ENCODE measurements at regions of chr11 and their contacts with region 1.

Region 1: DNA sequence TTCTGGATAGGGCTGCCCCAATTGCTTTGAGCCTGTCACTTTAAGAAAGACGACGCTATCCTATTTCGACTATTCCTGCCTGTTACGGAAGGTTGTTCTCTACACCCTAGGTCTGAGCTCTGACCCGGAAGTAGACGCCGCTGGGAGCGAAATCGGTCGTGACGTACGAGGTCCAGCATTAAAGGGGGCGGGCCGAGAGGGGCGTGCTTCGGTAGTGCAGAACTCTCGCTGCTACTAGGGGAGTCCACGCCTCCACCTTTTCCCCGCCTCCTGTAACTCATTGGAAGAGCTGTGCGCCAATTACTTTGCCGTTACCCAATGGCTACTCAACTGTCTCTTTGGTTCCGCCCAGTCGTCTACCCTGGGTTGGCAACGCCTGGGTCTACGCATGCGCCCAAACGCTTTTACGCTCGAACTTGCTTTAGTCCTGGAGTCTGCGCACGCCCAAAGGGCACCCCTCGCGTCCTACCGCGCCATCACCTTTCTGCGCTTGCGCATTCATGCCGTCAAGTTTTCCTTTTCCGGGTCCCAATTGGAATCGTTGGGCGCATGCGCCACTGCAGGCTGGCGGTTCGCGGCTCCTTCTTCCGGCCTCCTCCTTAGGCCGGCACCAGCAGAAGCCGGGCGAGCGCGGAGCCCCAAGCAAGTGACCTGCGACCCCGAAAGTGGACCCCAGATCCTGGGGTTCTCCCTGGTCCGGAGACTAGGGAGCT is at the start of gene PCNX3:
- DNase-seq: peak; percentile 99 to 100 (median 100)
- ATAC-seq: peak; percentile 87
- H3K4me3 ChIP-seq: peak within 1 kb of the TSS; percentile 93
- H3K4me3 Mint-ChIP-seq: peak within 1 kb of the TSS; percentile 98
- H3K27ac ChIP-seq: peak within 1 kb of the TSS; percentile 94
- H3K27ac Mint-ChIP-seq: peak within 1 kb of the TSS; percentile 93
- H3K4me1 ChIP-seq: peaks cover 67% of the 10 kb centered on the region
- H3K4me1 Mint-ChIP-seq: peaks cover 46% of the 10 kb centered on the region
- H3K27me3 ChIP-seq: no peaks in the 10 kb centered on the region
- H3K27me3 Mint-ChIP-seq: no peaks in the 10 kb centered on the region
- CTCF ChIP-seq: no peak
- total RNA-seq, gene PCNX3: 37.3 to 40.5 TPM

Region 2: DNA sequence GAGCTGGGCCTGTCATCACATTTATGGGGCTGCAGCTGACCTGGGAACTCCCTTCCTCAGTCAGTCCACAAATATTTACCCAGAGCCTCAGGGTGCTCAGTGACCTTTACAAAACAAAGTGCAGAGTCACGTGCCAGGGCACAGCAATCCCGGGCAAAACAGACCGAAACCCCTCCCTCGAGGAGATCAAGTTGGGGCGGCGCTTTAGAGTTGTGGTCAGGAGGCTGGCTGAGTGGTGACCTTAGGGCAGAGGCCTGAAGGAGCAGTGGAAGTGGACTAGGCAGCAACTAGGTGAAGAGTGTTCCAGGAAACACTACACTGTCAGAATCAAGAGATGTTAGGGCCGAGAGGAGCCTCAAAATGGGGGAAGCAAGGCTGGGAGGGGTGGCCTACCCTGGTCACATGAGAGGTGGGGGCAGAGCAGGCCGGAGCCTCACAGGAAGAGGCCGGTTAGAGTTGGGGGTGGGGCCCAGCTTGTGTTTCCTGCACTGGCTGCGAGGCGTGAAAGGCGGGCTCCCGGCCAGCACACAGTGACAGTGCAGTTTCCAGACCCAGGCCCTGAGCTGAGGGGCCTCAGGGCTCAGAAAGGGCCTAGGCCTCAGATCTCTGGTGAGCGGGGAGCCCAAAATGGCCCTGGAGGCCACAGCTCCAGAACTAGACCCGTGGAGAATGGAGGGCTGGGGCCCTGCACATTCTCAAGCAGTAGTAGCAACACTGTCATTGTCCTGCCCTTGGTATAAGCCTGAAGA is 196.5 kb before region 1 on chr11:
- CTCF ChIA-PET with region 1: no interaction called
- POLR2A ChIA-PET with region 1: interaction called, 16 read pairs
- intact Hi-C with region 1: no loop called
- DNase-seq: peak in 12 of 14 experiments; percentile 56 to 94 (median 75)
- ATAC-seq: peak; percentile 2
- H3K4me3 ChIP-seq: peak overlapping the region; percentile 86
- H3K4me3 Mint-ChIP-seq: peak overlapping the region; percentile 92
- H3K27ac ChIP-seq: peak overlapping the region; percentile 99
- H3K27ac Mint-ChIP-seq: peak overlapping the region; percentile 96
- H3K4me1 ChIP-seq: peaks cover 74% of the 10 kb centered on the region
- H3K4me1 Mint-ChIP-seq: peaks cover 57% of the 10 kb centered on the region
- H3K27me3 ChIP-seq: no peaks in the 10 kb centered on the region
- H3K27me3 Mint-ChIP-seq: no peaks in the 10 kb centered on the region
- CTCF ChIP-seq: no peak

Region 3: DNA sequence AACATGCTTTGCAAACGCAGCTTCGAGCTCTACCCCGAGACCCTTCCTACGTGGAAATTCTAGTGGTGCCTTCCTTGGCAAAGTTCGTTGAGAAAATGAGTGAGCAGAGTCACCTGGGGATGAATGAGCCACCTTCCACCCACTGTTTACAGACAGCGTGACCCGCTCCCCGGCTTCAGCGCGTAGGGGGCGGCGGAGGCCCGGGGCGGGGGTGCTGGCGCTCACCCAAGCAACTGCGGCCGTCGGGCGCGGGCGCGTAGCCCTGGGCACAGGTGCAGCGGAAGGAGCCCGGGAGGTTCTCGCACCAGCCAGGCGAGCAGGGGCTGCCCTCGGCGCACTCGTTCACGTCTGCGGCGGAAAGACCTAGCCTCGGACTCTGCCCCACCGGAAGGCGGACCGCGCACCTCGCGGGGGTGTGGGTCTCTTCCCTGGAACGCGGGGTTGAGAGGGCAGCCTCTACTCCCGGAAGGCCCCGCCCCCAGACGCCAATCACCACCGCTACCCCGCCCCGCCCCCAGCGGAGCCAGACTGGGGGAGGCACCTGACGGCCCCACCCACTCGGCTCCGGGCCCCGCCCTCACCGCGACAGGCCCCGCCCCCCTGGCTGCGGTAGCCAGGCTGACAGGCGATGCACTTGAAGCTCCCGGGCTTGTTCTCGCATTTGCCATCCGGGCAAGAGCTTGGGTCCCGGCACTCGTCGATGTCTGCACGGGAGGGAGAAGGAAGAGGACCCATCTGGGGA is 69.0 kb before region 1 on chr11:
- CTCF ChIA-PET with region 1: interaction called, 3 read pairs
- POLR2A ChIA-PET with region 1: interaction called, 32 read pairs
- intact Hi-C with region 1: loop called in 1 of 2 experiments (anchors 2 kb)
- DNase-seq: peak; percentile 96 to 100 (median 98)
- ATAC-seq: peak; percentile 80
- H3K4me3 ChIP-seq: peak overlapping the region; percentile 54
- H3K4me3 Mint-ChIP-seq: peak overlapping the region; percentile 86
- H3K27ac ChIP-seq: peak overlapping the region; percentile 57 to 82
- H3K27ac Mint-ChIP-seq: peak overlapping the region; percentile 81
- H3K4me1 ChIP-seq: peaks cover 49% of the 10 kb centered on the region
- H3K4me1 Mint-ChIP-seq: peaks cover 67% of the 10 kb centered on the region
- H3K27me3 ChIP-seq: no peaks in the 10 kb centered on the region
- H3K27me3 Mint-ChIP-seq: no peaks in the 10 kb centered on the region
- CTCF ChIP-seq: no peak

Region 4: GRCh38 chr11:65593518-65594298 is 21.7 kb before region 1 on chr11:
- CTCF ChIA-PET with region 1: no interaction called
- POLR2A ChIA-PET with region 1: interaction called, 11 read pairs
- intact Hi-C with region 1: no loop called
- DNase-seq: peak in 9 of 14 experiments; percentile 37 to 67 (median 43)
- ATAC-seq: peak; percentile 62
- H3K4me3 ChIP-seq: no peak overlapping the region
- H3K4me3 Mint-ChIP-seq: no peak overlapping the region
- H3K27ac ChIP-seq: no peak overlapping the region
- H3K27ac Mint-ChIP-seq: peak overlapping the region; percentile 36
- H3K4me1 ChIP-seq: peaks cover 31% of the 10 kb centered on the region
- H3K4me1 Mint-ChIP-seq: peaks cover 17% of the 10 kb centered on the region
- H3K27me3 ChIP-seq: no peaks in the 10 kb centered on the region
- H3K27me3 Mint-ChIP-seq: no peaks in the 10 kb centered on the region
- CTCF ChIP-seq: peak; percentile 66

Region 5: GRCh38 chr11:65652511-65653231 is 37.3 kb after region 1 on chr11:
- CTCF ChIA-PET with region 1: interaction called, 3 read pairs
- POLR2A ChIA-PET with region 1: interaction called, 79 read pairs
- intact Hi-C with region 1: loop called in 1 of 2 experiments (anchors 5 kb)
- DNase-seq: peak; percentile 92 to 99 (median 96)
- ATAC-seq: peak; percentile 75
- H3K4me3 ChIP-seq: peak overlapping the region; percentile 66
- H3K4me3 Mint-ChIP-seq: peak overlapping the region; percentile 88
- H3K27ac ChIP-seq: peak overlapping the region; percentile 95 to 99
- H3K27ac Mint-ChIP-seq: peak overlapping the region; percentile 97
- H3K4me1 ChIP-seq: peaks cover 60% of the 10 kb centered on the region
- H3K4me1 Mint-ChIP-seq: peaks cover 54% of the 10 kb centered on the region
- H3K27me3 ChIP-seq: no peaks in the 10 kb centered on the region
- H3K27me3 Mint-ChIP-seq: no peaks in the 10 kb centered on the region
- CTCF ChIP-seq: no peak

Region 6: DNA sequence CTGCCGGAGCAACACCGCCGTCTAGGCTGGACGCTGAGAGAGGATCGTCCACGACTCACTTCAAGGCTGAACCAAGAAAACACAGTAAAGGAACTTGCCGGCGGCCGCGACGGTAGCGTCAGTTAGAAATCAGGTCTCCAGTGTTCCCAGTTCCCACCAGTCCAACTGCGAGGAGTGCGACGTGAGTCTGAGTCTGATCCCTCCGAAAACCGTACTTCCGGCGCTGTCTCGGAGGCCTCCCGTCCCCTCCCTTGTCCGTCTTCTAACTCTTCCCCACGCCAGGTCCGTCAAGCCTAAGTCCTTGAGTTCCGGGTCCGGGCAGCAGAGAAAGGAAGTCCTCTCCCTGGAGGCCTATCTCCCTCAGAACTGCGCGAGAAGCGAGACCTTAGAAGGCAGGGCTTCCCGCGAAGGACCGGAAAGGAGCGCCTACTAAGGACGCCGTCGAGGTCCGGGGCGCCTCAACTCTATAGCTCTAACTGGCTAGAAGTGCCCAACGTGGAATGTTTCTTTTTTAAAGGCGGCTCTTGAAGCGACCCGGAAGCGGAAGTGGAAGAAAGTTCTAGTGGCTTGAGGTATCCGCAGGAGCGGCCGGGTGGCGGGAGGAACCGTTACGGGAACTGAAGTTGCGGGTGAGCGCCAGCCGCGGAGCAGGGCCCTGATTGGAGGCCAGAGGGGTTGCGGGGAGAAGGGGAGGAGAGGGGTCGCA is 386.7 kb after region 1 on chr11 and contains the starts of genes BANF1 and EIF1AD:
- CTCF ChIA-PET with region 1: no interaction called
- POLR2A ChIA-PET with region 1: interaction called, 10 read pairs
- intact Hi-C with region 1: no loop called
- DNase-seq: peak; percentile 84 to 98 (median 89)
- ATAC-seq: peak; percentile 77
- H3K4me3 ChIP-seq: peak within 1 kb of the TSS; percentile 75
- H3K4me3 Mint-ChIP-seq: peak within 1 kb of the TSS; percentile 94
- H3K27ac ChIP-seq: peak within 1 kb of the TSS; percentile 86 to 96
- H3K27ac Mint-ChIP-seq: peak within 1 kb of the TSS; percentile 97
- H3K4me1 ChIP-seq: peaks cover 39% of the 10 kb centered on the region
- H3K4me1 Mint-ChIP-seq: peaks cover 54% of the 10 kb centered on the region
- H3K27me3 ChIP-seq: no peaks in the 10 kb centered on the region
- H3K27me3 Mint-ChIP-seq: no peaks in the 10 kb centered on the region
- CTCF ChIP-seq: no peak
- total RNA-seq, gene BANF1: 21.3 to 22.3 TPM
- total RNA-seq, gene EIF1AD: 88.2 to 94.1 TPM

Measured in CD4-positive, alpha-beta T cell (primary cell).